ENCODE measurements at regions of chr3 and their contacts with region 1.

Region 1: DNA sequence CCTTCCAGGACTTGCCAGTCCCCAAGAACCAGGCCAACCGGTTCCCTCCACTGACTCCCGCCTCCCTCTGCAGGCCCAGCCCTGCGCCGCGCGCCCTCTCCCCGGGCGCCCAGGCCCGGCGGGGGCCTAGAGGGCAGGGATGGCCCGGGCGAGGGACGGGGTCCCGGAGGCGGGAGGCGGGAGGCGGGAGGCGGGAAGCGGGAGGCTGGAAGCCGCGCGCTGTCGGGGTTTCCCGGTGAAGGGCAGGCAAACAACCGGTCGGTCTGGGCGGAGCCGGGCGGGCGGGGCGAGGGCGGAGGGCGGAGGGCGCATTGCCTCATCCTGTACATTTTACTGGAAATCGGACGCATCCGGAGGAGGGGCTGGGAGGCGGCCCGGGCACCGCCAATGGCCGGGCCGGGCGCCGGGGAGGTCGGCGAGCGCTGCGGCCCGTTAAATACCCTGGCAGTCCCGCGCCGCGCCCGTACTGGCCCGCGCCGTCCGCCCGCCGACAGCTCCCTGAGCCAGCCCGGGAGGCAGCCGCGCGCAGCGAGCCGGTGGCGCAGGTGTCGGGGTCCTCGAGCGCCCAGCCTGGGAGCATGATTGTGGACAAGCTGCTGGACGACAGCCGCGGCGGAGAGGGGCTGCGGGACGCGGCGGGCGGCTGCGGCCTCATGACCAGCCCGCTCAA is at the start of gene NFKBIZ:
- DNase-seq: peak; percentile 94
- H3K4me3 ChIP-seq: peak within 1 kb of the TSS; percentile 88 to 99 (median 90)
- H3K27ac ChIP-seq: peak within 1 kb of the TSS; percentile 88
- H3K4me1 ChIP-seq: peaks cover 17% of the 10 kb centered on the region
- H3K27me3 ChIP-seq: no peaks in the 10 kb centered on the region
- CTCF ChIP-seq: no peak
- POLR2A ChIP-seq: peak; percentile 99
- total RNA-seq, gene NFKBIZ: 27.4 and 28.9 TPM in 2 replicates

Region 2: DNA sequence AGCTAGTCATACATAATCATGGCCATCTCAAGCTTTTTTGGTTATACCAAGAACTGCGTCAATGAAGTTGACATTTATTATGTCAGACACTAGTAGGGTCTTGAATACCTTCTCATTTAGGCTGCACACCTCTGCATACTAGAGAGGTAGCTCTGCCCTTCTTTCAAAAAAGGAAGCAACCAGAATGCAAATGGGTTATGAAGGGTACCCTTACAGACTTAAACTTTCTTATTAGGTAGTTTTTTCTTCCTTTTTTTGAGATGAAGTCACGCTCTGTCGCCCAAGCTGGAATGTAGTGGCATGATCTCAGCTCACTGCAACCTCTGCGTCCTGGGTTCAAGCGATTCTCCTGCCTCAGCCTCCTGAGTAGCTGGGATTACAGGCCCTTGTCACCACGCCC is 271.9 kb before region 1 on chr3:
- CTCF ChIA-PET with region 1: no interaction called
- POLR2A ChIA-PET with region 1: no interaction called
- dilution Hi-C with region 1: no loop called
- intact Hi-C with region 1: no loop called
- DNase-seq: no peak
- H3K4me3 ChIP-seq: no peak overlapping the region
- H3K27ac ChIP-seq: no peak overlapping the region
- H3K4me1 ChIP-seq: peaks cover 8% of the 10 kb centered on the region
- H3K27me3 ChIP-seq: no peaks in the 10 kb centered on the region
- CTCF ChIP-seq: no peak
- POLR2A ChIP-seq: no peak

Region 3: DNA sequence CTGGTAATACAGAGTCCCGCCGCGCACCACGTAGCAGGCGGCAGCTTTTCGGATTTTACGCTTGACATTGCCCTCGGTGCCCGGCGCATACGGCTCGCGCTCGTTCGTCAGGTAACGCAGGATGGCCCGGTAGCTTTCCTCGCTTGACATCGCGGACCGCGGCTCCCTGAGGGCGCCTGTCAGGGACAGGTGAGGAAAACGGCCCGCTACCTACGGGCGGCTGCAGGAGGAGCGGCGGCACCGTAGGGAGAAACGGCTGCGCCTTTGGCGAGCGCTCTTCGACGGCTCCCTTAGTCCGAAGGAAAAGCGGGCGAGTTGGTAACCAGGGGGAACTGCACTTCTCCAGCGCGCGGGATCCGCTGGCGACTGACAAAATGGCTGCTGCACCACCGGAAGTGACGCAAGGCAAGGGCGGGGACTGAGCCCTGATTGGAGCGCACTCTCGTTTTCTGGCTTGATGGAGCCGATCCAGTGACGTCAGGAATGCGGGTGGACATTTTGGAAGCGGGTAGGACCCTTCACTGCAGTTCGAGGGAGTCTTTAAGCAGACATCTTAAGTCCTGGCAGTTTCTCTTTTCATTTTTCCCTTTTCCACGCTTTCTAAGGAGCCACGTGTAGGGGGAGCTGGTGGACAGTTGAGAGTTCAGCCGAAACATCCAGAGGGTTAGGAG is 172.3 kb before region 1 on chr3 and contains the start of gene ZBTB11:
- CTCF ChIA-PET with region 1: no interaction called
- POLR2A ChIA-PET with region 1: no interaction called
- dilution Hi-C with region 1: no loop called
- intact Hi-C with region 1: no loop called
- DNase-seq: peak; percentile 100
- H3K4me3 ChIP-seq: peak within 1 kb of the TSS; percentile 67 to 80 (median 76)
- H3K27ac ChIP-seq: peak within 1 kb of the TSS; percentile 52
- H3K4me1 ChIP-seq: peaks cover 16% of the 10 kb centered on the region
- H3K27me3 ChIP-seq: no peaks in the 10 kb centered on the region
- CTCF ChIP-seq: peak; percentile 56 to 67
- POLR2A ChIP-seq: peak; percentile 62
- total RNA-seq, gene ZBTB11: 14.7 and 15.8 TPM in 2 replicates

Region 4: GRCh38 chr3:101724329-101725193 is 124.6 kb before region 1 on chr3 and contains the start of gene CEP97:
- CTCF ChIA-PET with region 1: no interaction called
- POLR2A ChIA-PET with region 1: interaction called, 4 read pairs
- dilution Hi-C with region 1: no loop called
- intact Hi-C with region 1: loop called (anchors 1 kb)
- DNase-seq: peak; percentile 94
- H3K4me3 ChIP-seq: peak within 1 kb of the TSS; percentile 72 to 96 (median 94)
- H3K27ac ChIP-seq: peak within 1 kb of the TSS; percentile 53
- H3K4me1 ChIP-seq: peaks cover 28% of the 10 kb centered on the region
- H3K27me3 ChIP-seq: no peaks in the 10 kb centered on the region
- CTCF ChIP-seq: no peak
- POLR2A ChIP-seq: peak; percentile 72
- total RNA-seq, gene CEP97: 10.3 and 14.0 TPM in 2 replicates

Region 5: DNA sequence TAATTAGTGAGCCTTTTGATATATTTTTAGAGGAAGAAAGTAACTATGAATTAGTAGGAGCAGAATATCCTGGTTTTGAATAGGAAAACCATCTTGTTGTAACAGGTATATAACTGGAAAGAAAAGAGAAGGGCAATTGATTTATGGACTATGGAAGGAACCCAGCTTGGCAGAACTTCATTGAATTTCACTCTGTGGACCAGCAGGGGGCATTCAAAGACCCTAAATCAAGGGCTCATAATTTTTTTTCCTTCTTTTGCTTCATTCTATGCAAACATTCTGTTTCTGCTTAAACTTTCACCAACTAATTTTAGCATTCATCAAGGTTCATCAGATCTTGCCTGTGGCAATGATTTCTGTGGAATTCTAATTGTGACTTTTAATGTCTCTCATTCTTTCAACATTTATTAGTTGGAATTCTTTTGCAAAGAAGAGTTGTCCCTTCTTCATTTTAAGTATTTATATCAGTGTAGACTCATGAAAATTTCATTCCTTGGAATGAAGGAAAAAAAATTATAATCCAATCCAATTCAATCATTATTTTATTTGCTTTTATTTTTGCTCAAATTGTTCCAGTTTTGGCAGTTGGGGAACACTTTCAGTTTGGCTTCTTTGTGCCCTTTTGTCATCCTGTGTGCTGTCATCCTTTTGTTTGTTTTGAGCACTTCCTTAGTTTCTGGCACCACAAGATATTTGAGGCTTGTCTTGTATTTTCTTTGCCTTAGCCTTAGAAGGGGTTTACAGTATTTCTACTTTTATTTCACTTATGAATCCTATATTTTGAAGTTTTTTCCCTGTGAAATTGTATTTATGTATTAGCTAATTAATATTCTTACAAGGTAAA is 39.8 kb before region 1 on chr3:
- CTCF ChIA-PET with region 1: interaction called, 6 read pairs
- POLR2A ChIA-PET with region 1: interaction called, 4 read pairs
- dilution Hi-C with region 1: no loop called
- intact Hi-C with region 1: loop called (anchors 1 kb)
- DNase-seq: peak; percentile 69
- H3K4me3 ChIP-seq: no peak overlapping the region
- H3K27ac ChIP-seq: peak overlapping the region; percentile 60
- H3K4me1 ChIP-seq: peaks cover 14% of the 10 kb centered on the region
- H3K27me3 ChIP-seq: no peaks in the 10 kb centered on the region
- CTCF ChIP-seq: peak; percentile 51 to 59
- POLR2A ChIP-seq: no peak

Region 6: DNA sequence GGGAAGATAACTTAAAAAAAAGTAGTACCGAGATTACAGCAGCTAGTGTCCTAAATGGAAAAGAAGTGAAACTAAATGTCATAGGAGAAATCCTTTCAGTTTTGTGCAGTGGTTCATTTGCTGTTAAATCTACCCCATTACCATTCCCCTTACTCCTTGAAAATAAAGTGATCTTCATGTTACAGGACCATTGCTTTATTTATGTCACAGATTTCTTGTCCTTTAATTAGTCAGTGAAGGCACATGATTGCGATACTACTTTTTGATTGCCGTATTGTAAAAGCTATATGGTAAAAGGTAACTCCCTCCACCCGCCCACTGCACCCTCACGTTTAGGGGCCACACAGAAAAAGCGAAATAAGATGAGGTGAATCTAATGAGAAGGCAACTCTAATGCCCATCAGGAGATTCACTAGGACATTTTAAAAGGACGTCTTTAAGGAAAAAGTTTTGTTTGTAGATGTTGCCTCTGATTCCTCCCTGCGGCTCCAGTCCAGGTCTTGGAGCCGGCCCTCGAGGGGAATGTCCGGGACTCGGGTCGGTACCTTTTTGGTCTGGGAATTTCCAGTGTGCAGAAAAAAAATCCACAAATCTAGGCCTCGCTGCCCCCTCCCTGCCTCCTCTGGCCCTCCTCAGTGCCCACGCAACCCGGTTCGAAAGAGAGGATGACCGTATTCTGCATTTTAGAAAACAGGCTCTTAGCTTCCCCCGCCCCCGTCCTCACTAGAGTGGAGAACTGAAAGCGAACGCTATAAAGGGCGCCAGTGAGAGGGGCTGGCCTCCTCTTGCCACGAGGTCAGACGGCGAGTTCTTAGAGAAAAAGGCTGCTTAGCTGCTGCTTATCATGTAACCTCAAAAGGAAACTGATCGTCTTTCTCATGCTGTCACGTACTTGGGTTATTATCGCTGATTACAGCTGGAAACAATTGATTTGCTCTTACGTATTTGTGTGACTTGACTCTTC is 21.7 kb before region 1 on chr3:
- CTCF ChIA-PET with region 1: interaction called, 8 read pairs
- POLR2A ChIA-PET with region 1: interaction called, 31 read pairs
- dilution Hi-C with region 1: no loop called
- intact Hi-C with region 1: loop called (anchors 1 kb)
- DNase-seq: peak; percentile 87
- H3K4me3 ChIP-seq: peak overlapping the region; percentile 56 to 70 (median 61)
- H3K27ac ChIP-seq: peak overlapping the region; percentile 82
- H3K4me1 ChIP-seq: peaks cover 12% of the 10 kb centered on the region
- H3K27me3 ChIP-seq: no peaks in the 10 kb centered on the region
- CTCF ChIP-seq: no peak
- POLR2A ChIP-seq: no peak

Region 7: DNA sequence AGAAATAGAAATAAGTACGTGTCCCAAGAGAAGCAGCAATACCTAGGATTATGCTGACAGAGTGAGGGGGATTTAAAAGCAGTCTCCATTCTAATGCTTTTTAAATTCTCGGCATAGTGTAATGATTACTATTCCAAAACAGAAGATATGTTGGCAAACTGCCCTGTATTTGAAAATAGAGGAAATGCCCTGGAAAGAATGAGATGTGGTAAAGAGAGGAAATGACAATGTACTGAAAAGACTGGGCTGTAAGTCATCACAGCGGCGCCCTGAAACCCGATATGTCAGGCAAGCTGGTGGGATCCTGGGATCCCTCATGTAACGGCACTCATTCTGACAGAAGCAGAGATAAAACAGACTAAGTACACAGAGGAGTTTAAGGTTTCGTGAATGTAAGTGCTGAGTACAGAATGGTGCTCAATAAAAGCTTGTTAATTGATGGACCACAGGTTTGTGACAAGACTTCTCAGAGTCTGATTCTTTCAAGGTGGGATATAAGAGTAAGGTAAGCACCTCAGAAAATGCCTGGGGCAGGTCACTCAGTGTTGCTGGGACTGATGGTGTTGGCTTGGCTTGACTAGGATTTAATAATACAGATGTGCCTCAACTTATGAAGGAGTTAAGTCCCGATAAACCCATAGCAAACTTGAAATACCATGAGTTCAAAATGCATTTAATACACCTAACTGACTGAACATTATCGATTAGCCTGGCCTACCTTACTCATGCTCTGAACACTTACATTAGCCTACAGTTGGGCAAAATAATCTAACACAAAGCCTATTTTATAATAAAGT is 91.5 kb after region 1 on chr3:
- CTCF ChIA-PET with region 1: no interaction called
- POLR2A ChIA-PET with region 1: interaction called, 4 read pairs
- dilution Hi-C with region 1: no loop called
- intact Hi-C with region 1: loop called (anchors 1 kb)
- DNase-seq: peak; percentile 94
- H3K4me3 ChIP-seq: peak overlapping the region in 1 of 3 experiments; percentile 46
- H3K27ac ChIP-seq: peak overlapping the region; percentile 88
- H3K4me1 ChIP-seq: peaks cover 51% of the 10 kb centered on the region
- H3K27me3 ChIP-seq: no peaks in the 10 kb centered on the region
- CTCF ChIP-seq: no peak
- POLR2A ChIP-seq: no peak

Region 8: DNA sequence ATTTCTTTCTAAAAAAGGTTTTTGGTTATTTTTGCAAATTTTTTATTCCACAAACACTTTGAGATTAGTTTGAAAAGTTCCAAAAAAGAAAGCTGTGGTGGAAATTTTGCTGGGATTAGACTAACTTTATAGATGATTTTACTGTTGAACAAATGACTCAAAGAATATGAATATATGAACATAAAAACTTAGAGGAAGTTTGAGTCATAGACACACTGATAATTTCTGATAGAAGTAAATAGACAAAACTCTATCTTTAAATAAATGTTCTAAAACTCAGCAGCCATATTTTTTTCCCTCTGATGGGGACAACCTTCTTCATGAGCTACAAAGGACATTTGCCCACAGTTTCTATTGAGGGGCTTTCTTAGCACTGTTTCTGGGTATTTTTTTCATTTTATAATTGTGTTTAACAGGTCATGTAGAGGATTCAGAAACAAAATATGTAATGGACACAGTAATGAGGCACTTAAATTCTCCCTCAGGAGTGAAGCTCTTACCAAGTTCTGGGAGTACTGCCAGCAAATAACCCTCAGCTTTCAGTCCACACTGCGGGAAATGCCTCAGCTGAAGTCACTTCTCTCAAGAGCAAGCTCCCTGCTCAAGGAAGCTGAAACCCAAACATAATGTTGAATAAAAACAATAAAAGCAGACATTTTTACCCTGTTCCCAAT is 157.8 kb after region 1 on chr3:
- CTCF ChIA-PET with region 1: interaction called, 3 read pairs
- POLR2A ChIA-PET with region 1: interaction called, 11 read pairs
- dilution Hi-C with region 1: no loop called
- intact Hi-C with region 1: loop called (anchors 5 kb)
- DNase-seq: peak; percentile 87
- H3K4me3 ChIP-seq: peak overlapping the region in 1 of 3 experiments; percentile 11
- H3K27ac ChIP-seq: peak overlapping the region; percentile 69
- H3K4me1 ChIP-seq: peaks cover 18% of the 10 kb centered on the region
- H3K27me3 ChIP-seq: no peaks in the 10 kb centered on the region
- CTCF ChIP-seq: no peak
- POLR2A ChIP-seq: no peak

Region 9: GRCh38 chr3:102089904-102090492 is 240.8 kb after region 1 on chr3:
- CTCF ChIA-PET with region 1: no interaction called
- POLR2A ChIA-PET with region 1: interaction called, 3 read pairs
- dilution Hi-C with region 1: no loop called
- intact Hi-C with region 1: loop called (anchors 5 kb)
- DNase-seq: peak; percentile 35
- H3K4me3 ChIP-seq: no peak overlapping the region
- H3K27ac ChIP-seq: no peak overlapping the region
- H3K4me1 ChIP-seq: peaks cover 22% of the 10 kb centered on the region
- H3K27me3 ChIP-seq: no peaks in the 10 kb centered on the region
- CTCF ChIP-seq: no peak
- POLR2A ChIP-seq: no peak